Ovary (tissue), 10 donors: ENCODE measurements at regions of chr14 and their contacts with region 1.

Region 1: GRCh38 chr14:77053046-77053841 is 24.7 kb upstream of the IRF2BPL start:
- DNase-seq: peak; percentile 78 to 87 (median 86)
- H3K4me3 ChIP-seq: no peak overlapping the region
- H3K27ac ChIP-seq: no peak overlapping the region
- H3K4me1 ChIP-seq: no peaks in the 10 kb centered on the region
- H3K27me3 ChIP-seq: no peaks in the 10 kb centered on the region
- CTCF ChIP-seq: peak; percentile 75 to 96 (median 94)
- EP300 ChIP-seq: no peak
- POLR2A ChIP-seq: no peak

Region 2: GRCh38 chr14:75234173-75235115 is 1818.8 kb before region 1 on chr14:
- intact Hi-C with region 1: loop called in 1 of 4 experiments (anchors 5 kb)
- DNase-seq: peak in 2 of 5 donors; percentile 39 to 48
- H3K4me3 ChIP-seq: no peak overlapping the region
- H3K27ac ChIP-seq: no peak overlapping the region
- H3K4me1 ChIP-seq: peaks cover 13% of the 10 kb centered on the region
- H3K27me3 ChIP-seq: no peaks in the 10 kb centered on the region
- CTCF ChIP-seq: no peak
- EP300 ChIP-seq: no peak
- POLR2A ChIP-seq: no peak

Region 3: DNA sequence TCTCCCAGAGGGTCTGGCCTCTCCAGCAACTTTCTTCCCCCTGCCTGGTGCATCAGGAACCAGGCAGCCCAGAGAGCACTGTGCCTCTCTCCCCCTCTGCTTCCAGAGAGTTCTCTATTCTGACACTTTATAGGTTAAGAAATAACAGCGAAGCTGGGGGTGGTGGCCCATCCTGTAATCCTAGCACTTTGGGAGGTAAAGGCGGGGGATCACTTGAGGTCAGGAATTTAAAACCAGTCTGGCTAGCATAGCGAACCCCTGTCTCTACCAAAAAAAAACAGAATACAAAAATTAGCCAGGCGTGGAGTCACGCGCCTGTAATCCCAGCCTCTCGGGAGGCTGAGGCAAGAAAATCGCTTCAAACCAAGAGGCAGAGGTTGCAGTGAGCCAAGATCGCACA is 619.0 kb before region 1 on chr14:
- intact Hi-C with region 1: no loop called
- DNase-seq: no peak
- H3K4me3 ChIP-seq: no peak overlapping the region
- H3K27ac ChIP-seq: no peak overlapping the region
- H3K4me1 ChIP-seq: no peaks in the 10 kb centered on the region
- H3K27me3 ChIP-seq: no peaks in the 10 kb centered on the region
- CTCF ChIP-seq: no peak
- EP300 ChIP-seq: no peak
- POLR2A ChIP-seq: no peak

Region 4: GRCh38 chr14:76910371-76910890 is 142.8 kb before region 1 on chr14:
- intact Hi-C with region 1: loop called (anchors 1 to 5 kb)
- DNase-seq: no peak
- H3K4me3 ChIP-seq: no peak overlapping the region
- H3K27ac ChIP-seq: no peak overlapping the region
- H3K4me1 ChIP-seq: peaks cover 6% of the 10 kb centered on the region
- H3K27me3 ChIP-seq: no peaks in the 10 kb centered on the region
- CTCF ChIP-seq: no peak
- EP300 ChIP-seq: no peak
- POLR2A ChIP-seq: no peak

Region 5: DNA sequence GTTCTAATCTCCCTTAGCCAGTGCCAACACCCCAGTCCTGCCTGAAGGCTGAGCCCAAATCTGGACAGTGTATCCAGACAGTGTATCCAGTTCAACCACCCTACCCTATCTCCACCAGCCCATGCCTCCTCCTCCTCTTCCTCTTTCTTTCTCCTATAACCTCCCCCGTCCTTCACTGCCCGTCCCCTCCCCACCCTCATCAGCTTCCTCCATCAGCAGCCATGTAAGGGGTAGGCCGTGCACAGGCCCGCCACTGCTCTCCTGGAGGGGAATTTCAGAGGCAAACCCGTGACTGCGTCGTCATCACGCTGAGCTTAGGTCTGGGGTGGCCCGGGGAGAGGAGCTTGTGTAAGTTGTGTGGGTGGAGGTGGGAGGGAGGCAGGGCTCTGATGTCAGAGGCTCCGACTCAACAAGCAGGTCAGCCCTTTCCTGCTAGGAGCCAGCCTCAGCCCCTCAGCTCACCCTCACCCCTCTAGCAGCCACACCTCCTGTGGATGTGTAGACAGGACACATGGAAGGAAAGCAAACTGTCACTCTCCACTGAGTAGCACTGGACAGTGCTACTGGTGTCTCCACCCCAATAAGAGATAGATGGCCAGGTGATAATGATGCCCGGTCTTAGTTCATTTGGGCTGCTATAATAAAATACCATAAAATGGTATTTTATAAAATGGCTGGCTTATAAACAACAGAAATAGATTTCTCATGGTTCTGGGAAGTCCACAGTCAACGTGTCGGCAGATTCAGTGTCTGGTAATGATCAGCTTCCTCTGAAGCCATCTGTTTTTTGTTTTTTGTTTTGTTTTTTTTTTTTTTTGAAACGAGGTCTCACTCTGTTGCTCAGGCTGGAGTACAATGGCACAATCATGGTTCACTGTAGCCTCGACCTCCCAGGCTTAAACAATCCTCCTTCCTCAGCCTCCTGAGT is 75.2 kb before region 1 on chr14:
- intact Hi-C with region 1: no loop called
- DNase-seq: peak in 4 of 5 donors; percentile 35 to 61 (median 50)
- H3K4me3 ChIP-seq: no peak overlapping the region
- H3K27ac ChIP-seq: no peak overlapping the region
- H3K4me1 ChIP-seq: peaks cover 3% of the 10 kb centered on the region
- H3K27me3 ChIP-seq: no peaks in the 10 kb centered on the region
- CTCF ChIP-seq: no peak
- EP300 ChIP-seq: no peak
- POLR2A ChIP-seq: no peak

Region 6: GRCh38 chr14:77314043-77314442 is 260.8 kb after region 1 on chr14:
- intact Hi-C with region 1: no loop called
- DNase-seq: no peak
- H3K4me3 ChIP-seq: no peak overlapping the region
- H3K27ac ChIP-seq: no peak overlapping the region
- H3K4me1 ChIP-seq: peaks cover 9% of the 10 kb centered on the region
- H3K27me3 ChIP-seq: no peaks in the 10 kb centered on the region
- CTCF ChIP-seq: no peak
- EP300 ChIP-seq: no peak
- POLR2A ChIP-seq: no peak